ENCODE measurements at regions of chr13 and their contacts with region 1.

Region 1: DNA sequence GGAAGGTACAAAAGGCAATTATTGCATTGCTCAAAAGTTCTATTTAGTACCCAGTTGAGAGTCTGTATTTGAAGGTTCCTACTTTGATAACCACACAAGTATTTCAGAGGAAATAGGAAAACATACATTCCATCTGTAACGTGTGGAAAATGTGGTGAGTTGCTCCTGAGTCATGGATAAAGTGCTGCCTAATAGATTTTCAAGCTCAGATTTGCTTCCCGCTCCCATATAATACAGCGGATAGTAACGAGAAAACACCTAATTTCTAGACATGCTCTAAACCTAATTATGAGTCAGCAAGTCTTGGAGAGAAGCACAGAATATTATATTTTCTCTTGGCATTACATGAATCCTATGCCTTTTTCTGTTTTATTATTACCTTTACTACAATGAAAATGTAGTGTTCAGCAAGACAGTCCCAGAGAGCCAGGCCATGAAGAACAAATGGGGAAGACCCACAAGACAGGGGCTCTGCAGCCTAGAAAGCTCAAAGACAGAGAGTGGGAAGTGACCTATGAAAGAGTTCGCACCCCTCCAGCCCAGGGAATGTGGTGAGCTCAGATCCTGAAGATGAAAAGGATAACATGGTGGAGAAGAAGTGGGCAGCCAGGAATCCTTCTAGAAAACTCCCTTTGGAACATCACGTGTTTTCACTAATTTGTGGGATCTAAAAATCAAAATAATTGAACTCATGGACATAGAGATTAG is 116.1 kb downstream of the STARD13 start:
- DNase-seq: peak; percentile 86
- H3K4me3 ChIP-seq: no peak overlapping the region
- H3K27ac ChIP-seq: peak overlapping the region; percentile 84
- H3K4me1 ChIP-seq: peaks cover 43% of the 10 kb centered on the region
- H3K27me3 ChIP-seq: no peaks in the 10 kb centered on the region
- CTCF ChIP-seq: no peak

Region 2: GRCh38 chr13:33205804-33206221 is 36.4 kb after region 1 on chr13:
- CTCF ChIA-PET with region 1: no interaction called
- dilution Hi-C with region 1: no loop called
- in situ Hi-C with region 1: no loop called
- intact Hi-C with region 1: loop called (anchors 5 kb)
- DNase-seq: no peak
- H3K4me3 ChIP-seq: no peak overlapping the region
- H3K27ac ChIP-seq: no peak overlapping the region
- H3K4me1 ChIP-seq: peaks cover 17% of the 10 kb centered on the region
- H3K27me3 ChIP-seq: no peaks in the 10 kb centered on the region
- CTCF ChIP-seq: no peak